ENCODE measurements at regions of chr9 and their contacts with region 1.

Region 1: DNA sequence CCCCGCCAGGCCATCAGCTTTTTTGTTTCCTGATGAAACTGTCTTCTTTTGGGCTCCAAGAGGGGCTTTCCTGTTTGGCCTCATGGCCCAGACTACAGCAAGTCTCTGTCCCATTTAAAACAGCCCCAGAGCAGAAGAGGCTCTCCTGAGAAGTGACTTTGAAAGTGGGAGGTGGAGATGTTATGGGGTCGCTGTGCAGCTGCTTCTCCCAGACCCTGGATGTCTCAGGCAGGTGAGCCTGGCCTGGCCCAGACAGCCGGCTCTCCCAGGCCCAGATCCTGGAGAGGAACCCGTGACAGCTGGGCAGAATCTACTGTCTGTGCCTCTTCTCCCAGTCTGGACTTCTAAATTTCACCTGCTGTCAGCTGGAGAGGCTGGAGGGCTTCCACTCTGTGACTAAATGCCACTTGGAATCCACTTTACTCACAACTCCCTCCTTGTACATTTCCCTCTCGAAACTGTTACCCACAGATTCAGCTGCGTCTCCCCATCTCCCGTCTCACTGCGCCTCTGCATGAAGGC is 20.6 kb downstream of the FAM78A start:
- DNase-seq: no peak
- H3K4me3 Mint-ChIP-seq: peak overlapping the region; percentile 69
- H3K27ac Mint-ChIP-seq: peak overlapping the region; percentile 99
- H3K4me1 Mint-ChIP-seq: peaks cover 85% of the 10 kb centered on the region
- H3K27me3 Mint-ChIP-seq: peaks cover 4% of the 10 kb centered on the region

Region 2: DNA sequence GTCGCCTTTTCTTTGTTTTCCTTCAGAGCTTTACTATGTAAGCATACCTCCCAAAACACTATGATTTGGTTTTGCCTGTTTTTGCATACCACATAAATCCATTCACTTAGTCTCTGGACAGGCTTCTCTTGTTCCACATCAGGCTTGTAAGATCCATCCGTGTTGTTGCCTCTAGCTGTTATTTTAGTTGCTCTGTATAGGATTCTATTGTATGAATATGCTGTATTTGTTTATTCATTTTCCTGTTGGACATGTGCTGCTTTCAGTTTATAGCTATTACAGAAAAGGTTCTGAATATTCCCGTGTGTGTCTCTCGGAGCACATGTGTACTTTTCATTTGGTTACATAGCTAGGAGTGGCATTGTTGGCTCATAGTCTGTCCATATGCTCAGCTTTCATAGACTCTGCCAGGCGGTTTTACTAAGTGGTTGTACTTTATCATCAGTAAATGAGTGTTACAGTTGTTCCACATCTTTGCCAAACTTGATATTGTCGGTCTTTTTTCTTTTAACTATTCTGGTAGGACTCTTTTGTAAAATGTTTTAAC is 88.5 kb before region 1 on chr9:
- CTCF ChIA-PET with region 1: no interaction called
- DNase-seq: no peak
- H3K4me3 Mint-ChIP-seq: no peak overlapping the region
- H3K27ac Mint-ChIP-seq: no peak overlapping the region
- H3K4me1 Mint-ChIP-seq: peaks cover 5% of the 10 kb centered on the region
- H3K27me3 Mint-ChIP-seq: no peaks in the 10 kb centered on the region

Region 3: DNA sequence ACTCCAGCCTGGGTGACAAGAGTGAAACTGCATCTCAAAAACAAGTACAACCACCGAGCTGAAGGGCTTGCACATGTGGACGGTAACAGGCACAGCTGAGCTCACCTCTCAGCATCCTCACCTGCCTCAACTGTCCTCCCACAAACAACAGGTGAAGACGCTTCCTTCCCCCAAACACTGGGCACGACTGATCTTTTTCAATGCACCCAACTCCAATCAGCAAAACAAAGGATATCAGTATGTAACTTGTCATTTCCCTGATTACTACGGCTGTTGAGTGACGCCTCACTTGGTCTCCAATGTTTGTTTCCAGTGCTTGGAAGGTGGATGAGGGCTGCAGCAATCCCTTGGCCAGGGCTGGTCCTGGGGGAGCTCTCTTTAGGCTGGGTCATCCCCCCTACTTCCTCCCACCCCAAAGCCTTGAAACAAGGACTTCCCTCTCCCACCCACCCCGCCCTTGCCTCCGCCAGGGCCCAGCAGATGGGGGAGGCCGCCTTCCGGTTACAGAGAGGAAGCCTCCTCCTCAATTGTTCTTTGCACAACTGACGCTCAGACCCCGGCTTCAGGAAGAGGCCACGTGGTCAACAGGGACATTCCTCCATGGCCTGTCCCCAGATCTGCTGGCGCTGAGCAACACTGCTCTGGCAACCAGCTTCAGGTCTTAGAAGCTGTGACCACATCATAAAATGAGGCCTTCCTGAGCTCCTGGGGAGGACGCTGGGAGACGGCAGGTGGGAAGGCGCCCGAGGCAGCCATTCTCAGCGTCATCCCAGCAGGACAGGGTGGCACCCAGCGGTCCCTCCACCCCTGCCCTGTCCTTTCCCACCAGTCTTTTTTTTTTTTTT is 14.7 kb after region 1 on chr9:
- CTCF ChIA-PET with region 1: interaction called, 36 read pairs
- DNase-seq: peak; percentile 76
- H3K4me3 Mint-ChIP-seq: peak overlapping the region; percentile 97
- H3K27ac Mint-ChIP-seq: peak overlapping the region; percentile 99
- H3K4me1 Mint-ChIP-seq: peaks cover 64% of the 10 kb centered on the region
- H3K27me3 Mint-ChIP-seq: peaks cover 2% of the 10 kb centered on the region

Region 4: GRCh38 chr9:131276094-131276888 is 20.6 kb after region 1 on chr9 and contains the start of gene FAM78A:
- CTCF ChIA-PET with region 1: interaction called, 36 read pairs
- DNase-seq: peak; percentile 65
- H3K4me3 Mint-ChIP-seq: peak within 1 kb of the TSS; percentile 97
- H3K27ac Mint-ChIP-seq: peak within 1 kb of the TSS; percentile 99
- H3K4me1 Mint-ChIP-seq: peaks cover 33% of the 10 kb centered on the region
- H3K27me3 Mint-ChIP-seq: peaks cover 22% of the 10 kb centered on the region